Activated CD4-positive, alpha-beta memory T cell treated with anti-CD3 and anti-CD28 coated beads, Interleukin-2, amount 10 ng/mL, durations not matched to agents 7 days and 5 days (primary cell): ENCODE measurements at regions of chr14 and their contacts with region 1.

Region 1: DNA sequence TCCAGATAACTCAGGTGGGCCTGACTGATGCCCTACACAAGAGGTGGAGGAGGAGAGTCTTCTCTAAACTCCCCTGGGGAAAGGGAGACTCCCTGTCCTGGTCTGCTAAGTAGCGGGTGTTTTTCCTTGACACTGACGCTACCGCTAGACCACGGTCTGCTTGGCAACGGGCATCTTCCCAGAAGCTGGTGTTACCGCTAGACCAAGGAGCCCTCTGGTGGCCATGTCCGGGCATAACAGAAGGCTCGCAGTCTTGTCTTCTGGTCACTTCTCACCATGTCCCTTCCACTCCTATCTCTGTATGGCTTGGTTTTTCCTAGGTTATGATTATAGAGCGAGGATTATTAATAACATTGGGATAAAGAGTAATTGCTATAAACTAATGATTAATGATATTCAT is 965.5 kb downstream of the TMEM121 start:
- DNase-seq: no peak
- H3K4me3 Mint-ChIP-seq: no peak overlapping the region
- H3K27ac Mint-ChIP-seq: no peak overlapping the region
- H3K4me1 Mint-ChIP-seq: peaks cover 38% of the 10 kb centered on the region
- H3K27me3 Mint-ChIP-seq: peaks cover 2% of the 10 kb centered on the region

Region 2: DNA sequence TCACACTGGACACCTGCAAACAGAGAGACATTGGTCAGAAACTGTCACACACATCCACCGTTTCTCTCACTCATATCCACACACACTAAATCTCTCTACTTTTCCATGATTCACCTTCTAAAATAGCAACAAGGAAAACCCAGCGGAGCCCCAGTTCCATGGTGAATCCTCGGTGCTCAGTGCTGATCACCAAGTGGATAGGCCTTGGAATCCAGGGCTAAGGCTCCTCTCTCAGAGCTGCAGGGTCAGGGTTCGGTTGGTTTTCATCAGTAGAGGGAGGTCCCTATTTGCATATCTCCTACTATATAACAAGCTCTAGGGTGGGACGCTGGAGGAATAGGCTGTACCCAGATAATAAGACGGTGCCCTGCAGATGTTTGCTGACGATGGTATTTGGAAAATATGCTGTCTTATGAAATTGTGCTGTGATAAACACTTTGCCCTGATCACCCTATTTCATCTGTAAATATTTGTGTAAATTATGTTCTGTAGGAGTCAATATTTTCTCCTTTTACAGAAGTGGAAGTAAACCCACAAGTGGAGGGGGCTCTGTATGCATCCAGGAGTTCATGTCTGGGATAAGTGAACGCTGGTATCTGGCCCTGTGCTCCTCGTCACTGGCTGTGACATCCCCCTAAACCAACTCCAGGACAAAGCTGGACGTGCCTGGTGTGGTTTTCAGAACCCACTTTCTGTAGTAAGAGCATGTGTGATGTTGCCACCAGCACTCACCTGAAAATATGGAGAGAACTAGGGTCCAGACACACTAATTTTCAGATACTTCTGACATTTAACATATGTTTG is 256.3 kb before region 1 on chr14:
- CTCF ChIA-PET with region 1: no interaction called
- POLR2A ChIA-PET with region 1: no interaction called
- DNase-seq: no peak
- H3K4me3 Mint-ChIP-seq: no peak overlapping the region
- H3K27ac Mint-ChIP-seq: no peak overlapping the region
- H3K4me1 Mint-ChIP-seq: peaks cover 12% of the 10 kb centered on the region
- H3K27me3 Mint-ChIP-seq: peaks cover 19% of the 10 kb centered on the region

Region 3: DNA sequence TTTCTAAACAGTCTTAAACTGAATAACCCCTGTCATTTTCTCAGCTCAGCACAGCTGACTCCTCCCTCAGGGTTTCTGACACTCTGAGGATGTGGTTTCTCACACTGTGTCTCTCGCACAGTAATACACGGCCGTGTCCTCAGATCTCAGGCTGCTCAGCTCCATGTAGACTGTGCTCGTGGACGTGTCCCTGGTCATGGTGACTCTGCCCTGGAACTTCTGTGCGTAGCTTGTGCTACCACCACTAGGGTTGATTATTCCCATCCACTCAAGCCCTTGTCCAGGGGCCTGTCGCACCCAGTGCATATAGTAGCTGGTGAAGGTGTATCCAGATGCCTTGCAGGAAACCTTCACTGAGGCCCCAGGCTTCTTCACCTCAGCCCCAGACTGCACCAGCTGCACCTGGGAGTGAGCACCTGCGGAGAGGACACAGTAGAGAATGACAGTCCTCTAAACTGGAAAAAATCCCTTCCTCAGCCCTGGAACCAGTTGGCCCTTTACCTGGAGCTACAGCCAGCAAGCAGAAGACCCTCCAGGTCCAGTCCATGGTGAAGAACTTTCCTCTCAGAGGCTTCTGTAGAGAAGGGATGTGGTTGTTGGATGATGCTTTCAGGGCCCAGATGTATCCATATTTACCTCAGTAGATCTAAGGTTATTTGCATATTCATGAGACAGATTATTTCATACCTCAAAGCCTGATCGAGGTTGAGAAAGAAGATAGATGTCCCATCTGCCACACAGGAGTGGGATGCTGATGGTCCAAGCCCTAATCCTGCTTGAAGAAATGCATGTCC is 19.4 kb after region 1 on chr14:
- CTCF ChIA-PET with region 1: interaction called, 16 read pairs
- POLR2A ChIA-PET with region 1: interaction called, 10 read pairs
- DNase-seq: peak; percentile 70
- H3K4me3 Mint-ChIP-seq: peak overlapping the region; percentile 11
- H3K27ac Mint-ChIP-seq: peak overlapping the region; percentile 82
- H3K4me1 Mint-ChIP-seq: peaks cover 66% of the 10 kb centered on the region
- H3K27me3 Mint-ChIP-seq: peaks cover 32% of the 10 kb centered on the region

Region 4: DNA sequence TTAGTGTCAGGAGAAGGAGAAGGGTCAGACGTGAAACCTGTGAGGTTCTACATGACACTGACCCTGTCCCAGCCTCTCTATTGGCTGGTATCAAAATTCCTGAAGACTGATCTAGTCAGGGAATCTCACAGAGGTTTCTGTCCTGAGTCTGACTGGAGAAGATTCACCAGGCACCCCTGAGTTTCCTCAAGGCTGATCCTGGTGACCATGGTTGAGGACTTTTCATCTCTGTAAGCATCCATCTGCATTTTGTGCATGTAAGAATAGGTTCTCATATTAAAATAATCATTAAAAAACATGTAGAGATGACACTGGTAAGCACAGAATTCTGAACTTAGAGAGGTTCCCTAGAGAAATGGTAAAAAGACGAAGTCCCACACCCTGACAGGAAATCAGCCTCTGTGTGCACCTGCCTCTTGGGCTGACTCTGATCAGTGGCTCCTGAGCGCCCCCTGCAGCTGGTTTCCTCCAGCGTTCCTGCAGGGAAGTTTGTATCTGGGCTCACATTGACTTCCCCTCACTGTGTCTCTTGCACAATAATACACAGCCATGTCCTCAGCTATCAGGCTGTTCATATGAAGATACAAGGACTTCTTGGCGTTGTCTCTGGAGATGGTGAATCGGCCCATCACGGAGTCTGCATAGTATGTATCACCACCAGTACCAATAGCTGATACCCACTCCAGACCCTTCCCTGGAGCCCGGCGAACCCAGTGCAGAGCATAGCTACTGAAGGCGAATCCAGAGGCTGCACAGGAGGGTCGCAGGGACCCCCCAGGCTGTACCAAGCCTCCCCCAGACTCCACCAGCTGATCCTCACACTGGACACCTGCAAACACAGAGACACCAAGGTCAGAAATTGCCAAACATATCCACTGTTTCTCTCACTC is 26.4 kb after region 1 on chr14:
- CTCF ChIA-PET with region 1: interaction called, 14 read pairs
- POLR2A ChIA-PET with region 1: no interaction called
- DNase-seq: peak; percentile 85
- H3K4me3 Mint-ChIP-seq: no peak overlapping the region
- H3K27ac Mint-ChIP-seq: no peak overlapping the region
- H3K4me1 Mint-ChIP-seq: peaks cover 14% of the 10 kb centered on the region
- H3K27me3 Mint-ChIP-seq: peaks cover 46% of the 10 kb centered on the region